MCF 10A (cell line): ENCODE measurements at regions of chr1 and their contacts with region 1.

Region 1: DNA sequence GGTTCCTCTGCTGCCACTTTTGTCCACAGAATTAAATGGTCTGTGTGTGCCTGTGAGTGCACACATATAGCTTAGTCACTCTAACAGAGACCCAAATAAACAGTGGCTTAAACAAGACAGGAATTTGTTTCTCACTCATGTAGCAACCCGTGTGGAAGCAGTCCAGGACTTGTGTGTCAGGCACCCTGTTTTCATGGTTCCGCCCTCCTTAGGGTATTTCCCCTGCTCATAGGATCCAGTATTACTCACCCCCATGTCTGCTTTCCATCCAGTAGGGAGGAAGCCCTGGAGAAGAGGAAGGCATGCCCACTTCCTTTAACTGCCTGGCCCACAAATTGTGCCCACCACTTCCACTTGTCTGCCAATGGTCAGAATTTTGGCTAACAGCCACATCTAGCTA is 41.3 kb upstream of the TACSTD2 start:
- DNase-seq: peak; percentile 99
- H3K4me3 Mint-ChIP-seq: peak overlapping the region; percentile 24
- H3K27ac Mint-ChIP-seq: peak overlapping the region; percentile 91
- H3K4me1 Mint-ChIP-seq: peaks cover 36% of the 10 kb centered on the region
- H3K27me3 Mint-ChIP-seq: no peaks in the 10 kb centered on the region
- CTCF ChIP-seq: no peak

Region 2: DNA sequence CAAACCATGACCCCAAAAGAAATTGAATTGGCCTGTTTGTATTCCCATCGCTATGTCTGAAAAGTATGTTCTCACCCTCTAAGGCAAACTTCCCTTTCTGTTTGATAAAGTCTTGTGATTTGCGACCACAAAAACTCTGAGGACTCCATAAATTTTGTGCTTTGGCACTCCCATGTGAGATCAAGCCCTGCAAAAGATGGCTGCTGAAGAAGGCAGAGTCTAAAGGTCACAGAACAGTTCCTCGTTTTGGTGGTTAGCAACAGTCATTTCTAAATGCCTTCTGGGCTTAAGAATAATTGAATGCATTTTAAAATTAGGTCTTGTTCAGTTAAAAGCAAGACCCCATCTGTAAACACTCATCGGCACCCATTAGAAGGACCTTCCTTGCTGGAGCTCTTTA is 513.3 kb before region 1 on chr1:
- CTCF ChIA-PET with region 1: no interaction called
- POLR2A ChIA-PET with region 1: no interaction called
- intact Hi-C with region 1: no loop called
- DNase-seq: no peak
- H3K4me3 Mint-ChIP-seq: no peak overlapping the region
- H3K27ac Mint-ChIP-seq: no peak overlapping the region
- H3K4me1 Mint-ChIP-seq: no peaks in the 10 kb centered on the region
- H3K27me3 Mint-ChIP-seq: no peaks in the 10 kb centered on the region
- CTCF ChIP-seq: no peak

Region 3: DNA sequence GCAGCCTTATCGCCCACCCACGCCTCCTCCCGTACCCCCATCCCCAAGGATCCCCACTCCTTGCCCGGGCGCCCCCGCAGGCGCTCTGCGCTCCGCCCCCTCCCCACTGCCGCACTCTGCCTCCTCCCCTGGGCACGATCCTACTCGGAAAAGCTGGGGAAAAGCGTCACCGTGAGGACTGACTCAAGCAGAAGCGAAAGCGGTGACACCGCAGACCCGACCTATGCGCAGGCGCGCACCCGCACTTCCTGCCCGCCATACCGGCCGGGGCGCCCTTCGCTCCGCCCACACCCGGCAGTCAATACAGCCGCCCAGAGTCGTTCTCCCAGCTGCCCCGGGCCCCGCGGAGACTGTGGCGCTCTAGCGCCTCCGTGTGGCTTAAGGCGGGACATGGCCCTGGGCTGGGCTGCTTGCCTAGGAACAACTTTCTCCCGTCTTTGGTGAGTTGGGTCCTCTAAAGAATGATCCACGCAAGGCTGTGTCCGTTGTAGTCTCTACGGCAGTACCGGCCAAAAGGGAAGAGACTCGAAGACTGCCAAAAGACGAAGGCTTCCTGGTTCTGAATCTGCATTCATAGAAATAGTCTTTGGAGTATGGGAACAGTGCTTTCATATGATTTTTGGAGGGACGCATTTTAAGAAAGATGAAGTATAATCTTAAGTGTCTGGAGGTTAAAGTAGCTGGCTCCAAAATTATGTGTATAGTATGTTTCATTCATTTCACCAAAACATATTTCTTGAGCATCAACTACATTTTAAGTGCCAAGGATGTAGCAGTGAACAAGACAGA is 71.6 kb before region 1 on chr1 and contains the start of gene OMA1:
- CTCF ChIA-PET with region 1: interaction called, 3 read pairs
- POLR2A ChIA-PET with region 1: interaction called, 8 read pairs
- intact Hi-C with region 1: loop called (anchors 1 kb)
- DNase-seq: peak; percentile 93
- H3K4me3 Mint-ChIP-seq: peak within 1 kb of the TSS; percentile 92
- H3K27ac Mint-ChIP-seq: peak within 1 kb of the TSS; percentile 95
- H3K4me1 Mint-ChIP-seq: peaks cover 20% of the 10 kb centered on the region
- H3K27me3 Mint-ChIP-seq: no peaks in the 10 kb centered on the region
- CTCF ChIP-seq: peak; percentile 84
- total RNA-seq, gene OMA1: 15.7 and 17.9 TPM in 2 replicates

Region 4: DNA sequence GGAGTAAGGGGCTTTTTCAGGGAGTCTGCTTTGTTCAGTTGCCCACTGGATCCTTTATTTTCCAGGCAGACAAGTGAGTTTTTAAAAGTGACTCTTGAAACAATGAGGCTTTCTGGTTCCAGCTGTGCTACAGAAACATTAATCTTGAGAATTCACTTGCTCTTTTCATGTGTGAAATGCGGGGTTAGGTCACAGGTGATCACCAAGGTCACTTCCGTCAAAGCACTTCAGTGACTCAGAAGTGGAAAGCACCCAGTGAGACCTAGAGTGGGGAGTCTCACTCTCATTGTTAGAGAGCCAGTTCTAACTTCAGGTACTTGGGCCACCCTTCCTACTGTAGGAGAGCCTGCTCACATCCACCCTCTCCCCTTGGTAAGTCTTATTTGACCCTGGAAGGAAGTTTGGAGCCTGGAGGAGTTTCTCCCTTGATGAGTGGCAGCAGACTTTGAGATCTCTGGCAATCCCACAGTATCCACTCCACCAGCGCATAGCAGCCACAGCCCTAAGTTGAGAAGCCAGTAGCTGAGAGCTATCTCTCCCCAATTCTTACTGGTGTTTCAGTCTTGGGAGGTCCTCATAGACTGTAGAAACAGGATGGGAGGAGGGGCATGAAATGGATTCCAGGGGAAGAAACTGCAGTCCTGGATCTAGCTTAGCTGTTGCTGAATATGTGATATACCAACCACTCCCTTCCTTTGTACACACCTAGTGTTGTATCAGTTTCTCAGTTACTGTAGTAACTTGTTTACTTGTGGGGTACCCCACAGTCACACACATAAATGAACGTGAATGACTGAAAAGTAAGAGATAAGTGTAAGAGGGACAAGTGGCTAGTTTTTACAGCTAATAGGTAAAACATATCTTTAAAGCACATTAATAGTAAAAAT is 44.4 kb before region 1 on chr1:
- CTCF ChIA-PET with region 1: interaction called, 14 read pairs
- POLR2A ChIA-PET with region 1: interaction called, 36 read pairs
- intact Hi-C with region 1: loop called (anchors 1 kb)
- DNase-seq: peak; percentile 69
- H3K4me3 Mint-ChIP-seq: peak overlapping the region; percentile 89
- H3K27ac Mint-ChIP-seq: peak overlapping the region; percentile 70
- H3K4me1 Mint-ChIP-seq: peaks cover 29% of the 10 kb centered on the region
- H3K27me3 Mint-ChIP-seq: no peaks in the 10 kb centered on the region
- CTCF ChIP-seq: no peak

Region 5: GRCh38 chr1:58584082-58584895 is 34.0 kb before region 1 on chr1:
- CTCF ChIA-PET with region 1: interaction called, 6 read pairs
- POLR2A ChIA-PET with region 1: interaction called, 36 read pairs
- intact Hi-C with region 1: loop called (anchors 2 kb)
- DNase-seq: peak; percentile 98
- H3K4me3 Mint-ChIP-seq: peak overlapping the region; percentile 55
- H3K27ac Mint-ChIP-seq: peak overlapping the region; percentile 92
- H3K4me1 Mint-ChIP-seq: peaks cover 36% of the 10 kb centered on the region
- H3K27me3 Mint-ChIP-seq: no peaks in the 10 kb centered on the region
- CTCF ChIP-seq: no peak

Region 6: GRCh38 chr1:58592529-58593134 is 25.7 kb before region 1 on chr1:
- CTCF ChIA-PET with region 1: interaction called, 3 read pairs
- POLR2A ChIA-PET with region 1: interaction called, 16 read pairs
- intact Hi-C with region 1: no loop called
- DNase-seq: peak; percentile 94
- H3K4me3 Mint-ChIP-seq: peak overlapping the region; percentile 32
- H3K27ac Mint-ChIP-seq: peak overlapping the region; percentile 85
- H3K4me1 Mint-ChIP-seq: peaks cover 40% of the 10 kb centered on the region
- H3K27me3 Mint-ChIP-seq: no peaks in the 10 kb centered on the region
- CTCF ChIP-seq: no peak

Region 7: DNA sequence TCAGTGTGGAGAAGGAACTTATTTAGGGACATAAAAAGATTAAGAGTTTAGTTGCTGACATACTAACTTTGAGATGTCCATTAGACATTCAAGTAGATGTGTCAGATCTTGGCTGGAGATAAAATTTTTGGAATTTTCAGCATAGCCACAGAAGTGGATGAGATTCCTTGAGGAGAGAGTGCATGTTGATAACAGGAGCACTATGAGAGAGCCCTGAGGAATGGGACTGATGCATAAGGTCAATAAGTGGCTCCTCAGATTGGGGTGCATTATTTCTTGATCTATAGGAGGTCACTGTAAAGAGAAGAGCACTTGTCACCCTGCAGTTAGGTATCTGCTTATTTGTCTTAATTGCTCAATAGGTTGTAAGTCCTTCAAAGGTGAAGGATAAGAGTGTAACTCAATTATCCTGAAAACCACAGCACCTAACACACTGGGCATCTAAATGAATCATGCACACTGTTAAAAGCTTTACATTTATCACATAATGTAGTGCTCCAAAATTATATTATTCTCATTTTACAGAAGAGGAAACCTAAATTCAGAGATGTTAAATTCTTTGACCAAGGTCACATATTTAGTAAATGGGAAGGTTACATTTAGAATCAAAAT is 10.8 kb after region 1 on chr1:
- CTCF ChIA-PET with region 1: no interaction called
- POLR2A ChIA-PET with region 1: interaction called, 10 read pairs
- intact Hi-C with region 1: no loop called
- DNase-seq: no peak
- H3K4me3 Mint-ChIP-seq: no peak overlapping the region
- H3K27ac Mint-ChIP-seq: no peak overlapping the region
- H3K4me1 Mint-ChIP-seq: peaks cover 16% of the 10 kb centered on the region
- H3K27me3 Mint-ChIP-seq: no peaks in the 10 kb centered on the region
- CTCF ChIP-seq: no peak